CD8-positive, alpha-beta T cell (primary cell): ENCODE measurements at regions of chr5 and their contacts with region 1.

Region 1: GRCh38 chr5:104512063-104512825 is 949.7 kb upstream of the NUDT12 start:
- DNase-seq: no peak
- ATAC-seq: no peak
- H3K4me3 ChIP-seq: no peak overlapping the region
- H3K4me3 Mint-ChIP-seq: no peak overlapping the region
- H3K27ac ChIP-seq: no peak overlapping the region
- H3K27ac Mint-ChIP-seq: no peak overlapping the region
- H3K4me1 ChIP-seq: no peaks in the 10 kb centered on the region
- H3K4me1 Mint-ChIP-seq: no peaks in the 10 kb centered on the region
- H3K27me3 ChIP-seq: no peaks in the 10 kb centered on the region
- H3K27me3 Mint-ChIP-seq: no peaks in the 10 kb centered on the region
- CTCF ChIP-seq: no peak

Region 2: GRCh38 chr5:104412649-104413246 is 99.5 kb before region 1 on chr5:
- CTCF ChIA-PET with region 1: no interaction called
- POLR2A ChIA-PET with region 1: no interaction called
- intact Hi-C with region 1: no loop called
- DNase-seq: no peak
- ATAC-seq: no peak
- H3K4me3 ChIP-seq: no peak overlapping the region
- H3K4me3 Mint-ChIP-seq: no peak overlapping the region
- H3K27ac ChIP-seq: no peak overlapping the region
- H3K27ac Mint-ChIP-seq: no peak overlapping the region
- H3K4me1 ChIP-seq: no peaks in the 10 kb centered on the region
- H3K4me1 Mint-ChIP-seq: no peaks in the 10 kb centered on the region
- H3K27me3 ChIP-seq: no peaks in the 10 kb centered on the region
- H3K27me3 Mint-ChIP-seq: no peaks in the 10 kb centered on the region
- CTCF ChIP-seq: no peak

Region 3: DNA sequence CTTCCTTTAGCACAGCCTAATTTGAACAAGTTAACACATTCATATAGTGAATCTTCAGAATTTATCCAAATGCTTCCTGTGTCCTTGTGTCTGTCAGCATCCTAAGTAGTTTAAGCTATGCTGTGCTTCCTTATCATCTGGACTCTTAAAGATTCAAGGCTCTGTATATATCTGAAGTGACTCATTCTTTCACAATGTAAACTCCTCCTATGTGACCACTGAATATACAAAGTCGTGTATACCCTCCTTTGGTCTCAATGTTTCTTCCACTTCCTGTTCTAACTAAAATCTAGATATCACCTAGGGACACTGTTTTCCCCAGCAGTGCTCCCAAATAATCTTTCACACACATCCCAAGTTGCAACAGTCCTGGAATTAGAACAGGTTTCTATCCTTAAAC is 14.0 kb before region 1 on chr5:
- CTCF ChIA-PET with region 1: no interaction called
- POLR2A ChIA-PET with region 1: no interaction called
- intact Hi-C with region 1: loop called in 1 of 2 experiments (anchors 1 kb)
- DNase-seq: no peak
- ATAC-seq: no peak
- H3K4me3 ChIP-seq: no peak overlapping the region
- H3K4me3 Mint-ChIP-seq: no peak overlapping the region
- H3K27ac ChIP-seq: no peak overlapping the region
- H3K27ac Mint-ChIP-seq: no peak overlapping the region
- H3K4me1 ChIP-seq: no peaks in the 10 kb centered on the region
- H3K4me1 Mint-ChIP-seq: no peaks in the 10 kb centered on the region
- H3K27me3 ChIP-seq: no peaks in the 10 kb centered on the region
- H3K27me3 Mint-ChIP-seq: no peaks in the 10 kb centered on the region
- CTCF ChIP-seq: no peak

Region 4: DNA sequence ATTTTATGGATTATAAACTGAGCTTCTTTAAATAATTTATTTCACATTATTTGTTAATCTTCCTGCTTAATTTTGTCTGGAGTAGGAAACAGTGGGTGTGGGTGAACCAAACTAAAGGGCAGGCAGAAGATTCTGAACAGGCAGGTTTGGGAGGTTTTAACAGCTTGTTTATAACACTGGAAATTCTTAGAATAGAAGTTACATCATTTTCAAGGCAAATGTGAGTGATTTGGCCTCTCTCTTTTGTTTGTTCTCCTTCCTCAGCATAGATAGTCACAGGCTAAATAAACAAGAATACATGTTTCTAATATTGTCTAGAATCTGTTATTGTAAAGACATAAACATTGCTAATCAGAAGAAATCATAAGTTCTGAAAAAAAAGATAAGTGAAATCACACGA is 21.3 kb after region 1 on chr5:
- CTCF ChIA-PET with region 1: no interaction called
- POLR2A ChIA-PET with region 1: no interaction called
- intact Hi-C with region 1: loop called in 1 of 2 experiments (anchors 1 kb)
- DNase-seq: no peak
- ATAC-seq: no peak
- H3K4me3 ChIP-seq: no peak overlapping the region
- H3K4me3 Mint-ChIP-seq: no peak overlapping the region
- H3K27ac ChIP-seq: no peak overlapping the region
- H3K27ac Mint-ChIP-seq: no peak overlapping the region
- H3K4me1 ChIP-seq: no peaks in the 10 kb centered on the region
- H3K4me1 Mint-ChIP-seq: no peaks in the 10 kb centered on the region
- H3K27me3 ChIP-seq: no peaks in the 10 kb centered on the region
- H3K27me3 Mint-ChIP-seq: no peaks in the 10 kb centered on the region
- CTCF ChIP-seq: no peak